ENCODE measurements at regions of chr18 and their contacts with region 1.

Region 1: DNA sequence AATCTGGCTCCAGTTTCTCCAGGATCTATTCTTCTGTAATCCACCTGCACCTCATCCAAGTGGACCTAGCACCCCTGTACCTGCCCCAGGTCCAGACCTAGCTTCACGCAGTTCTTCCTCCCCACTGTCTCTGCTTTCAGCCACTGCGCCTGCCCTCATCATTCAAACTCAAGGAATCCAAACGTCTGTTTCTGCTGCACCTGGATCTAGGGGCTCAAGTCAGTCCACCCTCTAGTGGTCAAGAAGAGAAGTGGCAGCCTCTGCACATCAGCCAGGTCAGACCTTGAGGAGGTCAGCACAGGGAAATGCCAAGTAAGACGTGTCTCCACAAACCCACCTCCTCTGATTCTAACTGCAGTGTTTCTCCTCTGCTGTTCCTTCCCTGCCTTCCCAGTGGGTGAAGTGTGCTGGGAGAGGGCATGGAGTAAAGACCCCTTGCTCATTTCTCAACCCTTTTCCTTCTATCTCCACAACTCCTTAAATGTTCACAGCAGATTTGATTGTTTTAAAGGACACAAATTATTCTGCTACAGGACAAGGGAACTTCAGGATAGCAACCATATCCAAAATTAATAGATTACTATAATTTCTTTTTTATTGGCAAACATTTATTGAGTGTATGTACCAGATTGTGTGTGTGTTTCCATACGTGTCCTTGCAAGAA is 8.6 kb upstream of the RNF152 start:
- DNase-seq: peak; percentile 35
- ATAC-seq: peak; percentile 89
- H3K4me3 ChIP-seq: no peak overlapping the region
- H3K27ac ChIP-seq: no peak overlapping the region
- H3K4me1 ChIP-seq: no peaks in the 10 kb centered on the region
- H3K27me3 ChIP-seq: 0 out of 5 replicates have a peak, but pooled peaks cover 0 to 4% of the 10 kb centered on the region in 2 experiments
- CTCF ChIP-seq: peak; percentile 83
- EP300 ChIP-seq: no peak
- POLR2A ChIP-seq: no peak
- RAD21 ChIP-seq: 0 out of 2 replicates have a peak, but pooled peaks have one; percentile 19

Region 2: DNA sequence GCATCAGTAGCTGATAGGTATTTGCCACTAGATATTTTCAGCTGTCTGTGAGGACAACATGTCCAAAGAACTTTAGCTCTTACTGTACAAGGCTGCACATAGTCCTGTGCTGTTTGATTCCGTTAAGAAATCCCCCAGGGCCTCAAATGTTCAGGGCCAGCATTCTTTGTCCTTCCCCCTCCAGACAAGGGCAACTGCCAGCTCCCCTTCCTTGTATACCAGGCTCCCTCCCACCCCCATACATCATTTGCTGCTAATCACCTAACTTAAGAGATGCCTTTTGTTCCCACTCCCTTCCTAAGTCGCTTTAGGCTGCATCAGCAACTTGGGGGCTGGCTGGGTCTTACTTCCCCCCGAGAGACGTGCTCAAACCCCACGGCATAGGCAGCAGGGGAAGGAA is 429.5 kb before region 1 on chr18:
- CTCF ChIA-PET with region 1: no interaction called
- POLR2A ChIA-PET with region 1: no interaction called
- in situ Hi-C with region 1: no loop called
- intact Hi-C with region 1: no loop called
- DNase-seq: no peak
- ATAC-seq: no peak
- H3K4me3 ChIP-seq: no peak overlapping the region
- H3K27ac ChIP-seq: no peak overlapping the region
- H3K4me1 ChIP-seq: no peaks in the 10 kb centered on the region
- H3K27me3 ChIP-seq: peaks cover 0 to 11% of the 10 kb centered on the region in 2 experiments; a peak in 1 of 5 replicates
- CTCF ChIP-seq: no peak
- EP300 ChIP-seq: no peak
- POLR2A ChIP-seq: no peak
- RAD21 ChIP-seq: no peak

Region 3: GRCh38 chr18:61581578-61582201 is 319.8 kb before region 1 on chr18:
- CTCF ChIA-PET with region 1: no interaction called
- POLR2A ChIA-PET with region 1: no interaction called
- in situ Hi-C with region 1: no loop called
- intact Hi-C with region 1: loop called (anchors 1 kb)
- DNase-seq: peak; percentile 14
- ATAC-seq: peak; percentile 100
- H3K4me3 ChIP-seq: peak overlapping the region in 1 of 3 experiments; percentile 26; a peak in 1 of 6 replicates
- H3K27ac ChIP-seq: no peak overlapping the region
- H3K4me1 ChIP-seq: no peaks in the 10 kb centered on the region
- H3K27me3 ChIP-seq: 0 out of 5 replicates have a peak, but pooled peaks cover 0 to 4% of the 10 kb centered on the region in 2 experiments
- CTCF ChIP-seq: peak; percentile 92
- EP300 ChIP-seq: no peak
- POLR2A ChIP-seq: no peak
- RAD21 ChIP-seq: peak; percentile 68

Region 4: GRCh38 chr18:61635901-61636528 is 265.4 kb before region 1 on chr18:
- CTCF ChIA-PET with region 1: interaction called, 3 read pairs
- POLR2A ChIA-PET with region 1: no interaction called
- in situ Hi-C with region 1: no loop called
- intact Hi-C with region 1: loop called (anchors 1 kb)
- DNase-seq: peak; percentile 18
- ATAC-seq: peak; percentile 85
- H3K4me3 ChIP-seq: no peak overlapping the region
- H3K27ac ChIP-seq: no peak overlapping the region
- H3K4me1 ChIP-seq: no peaks in the 10 kb centered on the region
- H3K27me3 ChIP-seq: no peaks in the 10 kb centered on the region
- CTCF ChIP-seq: peak; percentile 71
- EP300 ChIP-seq: no peak
- POLR2A ChIP-seq: no peak
- RAD21 ChIP-seq: 0 out of 2 replicates have a peak, but pooled peaks have one; percentile 29

Measured in HepG2 (cell line).